GM13977 (cell line): ENCODE measurements at regions of chr12 and their contacts with region 1.

Region 1: GRCh38 chr12:54993161-54993835 is 8.7 kb upstream of the TESPA1 start:
- DNase-seq: peak; percentile 57
- CTCF ChIP-seq: peak; percentile 71

Region 2: DNA sequence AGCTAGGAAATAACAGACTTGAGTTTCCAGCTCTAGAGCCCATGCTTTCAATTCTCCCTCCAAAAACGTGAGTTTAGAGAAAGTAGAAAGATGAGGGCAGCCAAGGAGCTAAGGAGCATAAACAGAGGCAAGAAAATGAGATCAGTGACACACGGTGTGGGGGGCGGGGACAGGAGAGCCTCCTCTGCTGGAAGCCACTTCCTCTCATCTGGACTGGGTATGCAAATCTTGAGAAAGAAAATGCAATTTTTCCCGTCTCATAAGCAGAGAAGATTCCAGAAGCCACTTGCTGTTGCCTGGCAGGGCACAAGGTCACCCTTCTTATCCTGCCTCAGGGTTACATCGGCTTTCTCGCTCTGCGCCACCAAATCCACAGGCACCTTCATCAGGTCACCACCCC is 649.4 kb after region 1 on chr12:
- in situ Hi-C with region 1: loop called (anchors 25 kb)
- DNase-seq: no peak
- CTCF ChIP-seq: no peak